Heart left ventricle (tissue), 16 donors: ENCODE measurements at regions of chr1 and their contacts with region 1.

Region 1: GRCh38 chr1:40338745-40339424 is 21.8 kb upstream of the COL9A2 start:
- DNase-seq: peak; percentile 51 to 86 (median 74)
- ATAC-seq: peak; percentile 61 to 85 (median 74)
- H3K4me3 ChIP-seq: peak overlapping the region in 1 of 12 donors; percentile 40
- H3K27ac ChIP-seq: peak overlapping the region in 1 of 12 donors; percentile 92
- H3K4me1 ChIP-seq: peaks cover 0 to 53% (median 0%) of the 10 kb centered on the region in 12 donors
- H3K27me3 ChIP-seq: peaks cover 0 to 13% (median 0%) of the 10 kb centered on the region in 9 donors
- CTCF ChIP-seq: peak; percentile 94 to 99 (median 96)
- POLR2A ChIP-seq: no peak

Region 2: GRCh38 chr1:40079774-40080400 is 259.0 kb before region 1 on chr1:
- intact Hi-C with region 1: loop called in 3 of 10 experiments (anchors 2 to 10 kb)
- DNase-seq: no peak
- ATAC-seq: peak in 1 of 4 donors; percentile 27
- H3K4me3 ChIP-seq: no peak overlapping the region
- H3K27ac ChIP-seq: peak overlapping the region in 1 of 12 donors; percentile 81
- H3K4me1 ChIP-seq: peaks cover 0 to 78% (median 0%) of the 10 kb centered on the region in 12 donors
- H3K27me3 ChIP-seq: no peaks in the 10 kb centered on the region
- CTCF ChIP-seq: no peak
- POLR2A ChIP-seq: no peak

Region 3: DNA sequence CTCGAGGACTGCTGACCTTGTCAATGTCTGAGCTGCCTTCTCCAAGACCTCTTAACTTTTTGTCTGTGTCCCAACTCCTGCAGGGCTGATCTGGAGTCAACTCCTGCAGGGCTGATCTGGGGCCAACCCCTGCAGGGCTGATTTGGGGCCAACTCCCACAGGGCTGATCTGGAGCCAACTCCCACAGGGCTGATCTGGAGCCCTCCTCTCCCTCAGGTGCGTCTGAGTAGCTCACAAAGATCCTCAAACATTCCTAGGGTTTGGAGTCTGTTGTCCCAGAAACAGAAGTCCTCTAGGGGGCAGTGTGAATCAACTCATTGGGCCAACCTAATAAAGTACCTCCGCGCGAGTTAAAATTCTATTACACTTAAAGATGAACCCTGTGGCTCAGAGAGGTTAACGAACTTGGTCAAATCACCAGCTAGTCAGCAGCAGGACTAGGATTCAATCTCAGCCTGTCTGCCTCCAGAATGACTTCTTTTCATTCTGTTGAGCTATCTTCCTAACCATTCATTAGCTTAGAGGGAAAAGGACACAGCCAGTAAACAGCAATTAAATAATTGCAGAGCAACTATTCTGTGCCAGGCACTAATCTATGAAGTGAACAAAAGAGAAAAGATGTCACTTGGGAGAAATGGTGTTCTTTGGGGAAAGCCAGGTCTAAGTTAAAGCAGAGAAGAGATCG is 194.9 kb before region 1 on chr1:
- intact Hi-C with region 1: loop called in 7 of 10 experiments (anchors 2 to 5 kb)
- DNase-seq: peak in 4 of 5 donors; percentile 31 to 51 (median 35)
- ATAC-seq: peak in 3 of 4 donors; percentile 72 to 80 (median 77)
- H3K4me3 ChIP-seq: no peak overlapping the region
- H3K27ac ChIP-seq: no peak overlapping the region
- H3K4me1 ChIP-seq: peaks cover 0 to 6% (median 0%) of the 10 kb centered on the region in 12 donors
- H3K27me3 ChIP-seq: peaks cover 0 to 33% (median 7%) of the 10 kb centered on the region in 9 donors
- CTCF ChIP-seq: peak; percentile 58 to 82 (median 74)
- POLR2A ChIP-seq: no peak

Region 4: DNA sequence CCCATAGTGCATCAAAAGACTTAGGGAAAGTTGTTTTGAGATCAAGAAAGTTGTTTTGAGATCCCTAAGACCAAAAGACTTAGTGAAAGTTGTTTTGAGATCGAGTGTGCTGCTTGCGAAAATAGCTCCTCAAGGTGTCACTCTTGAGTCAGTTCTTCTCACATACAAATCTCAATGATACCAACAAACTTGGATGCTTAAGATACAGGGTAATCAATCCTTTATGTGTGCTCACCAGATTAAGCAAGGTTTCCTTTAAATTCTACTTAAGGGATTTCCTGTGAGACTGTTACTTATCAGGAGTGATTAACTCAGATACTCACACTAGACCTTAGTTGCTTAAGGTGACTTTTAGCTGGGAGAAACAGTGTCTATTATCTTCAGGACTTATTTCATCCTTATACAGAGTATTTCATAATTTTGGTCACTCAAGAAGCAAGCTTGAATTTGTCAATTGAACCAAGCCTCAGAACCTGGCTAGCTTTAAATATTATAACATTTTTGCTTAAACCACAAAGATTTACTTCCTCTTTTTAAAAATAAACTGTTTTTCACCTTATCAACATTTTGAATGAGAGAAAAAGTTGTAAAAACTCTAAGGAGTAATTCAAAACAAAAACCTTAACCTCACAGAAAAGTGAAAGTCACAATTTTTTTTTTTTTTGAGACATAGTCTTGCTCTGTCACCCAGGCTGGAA is 185.7 kb before region 1 on chr1:
- intact Hi-C with region 1: loop called in 8 of 10 experiments (anchors 1 to 5 kb)
- DNase-seq: no peak
- ATAC-seq: no peak
- H3K4me3 ChIP-seq: no peak overlapping the region
- H3K27ac ChIP-seq: no peak overlapping the region
- H3K4me1 ChIP-seq: peaks cover 0 to 25% (median 0%) of the 10 kb centered on the region in 12 donors
- H3K27me3 ChIP-seq: peaks cover 0 to 10% (median 0%) of the 10 kb centered on the region in 9 donors
- CTCF ChIP-seq: peak; percentile 45 to 82 (median 68)
- POLR2A ChIP-seq: no peak

Region 5: DNA sequence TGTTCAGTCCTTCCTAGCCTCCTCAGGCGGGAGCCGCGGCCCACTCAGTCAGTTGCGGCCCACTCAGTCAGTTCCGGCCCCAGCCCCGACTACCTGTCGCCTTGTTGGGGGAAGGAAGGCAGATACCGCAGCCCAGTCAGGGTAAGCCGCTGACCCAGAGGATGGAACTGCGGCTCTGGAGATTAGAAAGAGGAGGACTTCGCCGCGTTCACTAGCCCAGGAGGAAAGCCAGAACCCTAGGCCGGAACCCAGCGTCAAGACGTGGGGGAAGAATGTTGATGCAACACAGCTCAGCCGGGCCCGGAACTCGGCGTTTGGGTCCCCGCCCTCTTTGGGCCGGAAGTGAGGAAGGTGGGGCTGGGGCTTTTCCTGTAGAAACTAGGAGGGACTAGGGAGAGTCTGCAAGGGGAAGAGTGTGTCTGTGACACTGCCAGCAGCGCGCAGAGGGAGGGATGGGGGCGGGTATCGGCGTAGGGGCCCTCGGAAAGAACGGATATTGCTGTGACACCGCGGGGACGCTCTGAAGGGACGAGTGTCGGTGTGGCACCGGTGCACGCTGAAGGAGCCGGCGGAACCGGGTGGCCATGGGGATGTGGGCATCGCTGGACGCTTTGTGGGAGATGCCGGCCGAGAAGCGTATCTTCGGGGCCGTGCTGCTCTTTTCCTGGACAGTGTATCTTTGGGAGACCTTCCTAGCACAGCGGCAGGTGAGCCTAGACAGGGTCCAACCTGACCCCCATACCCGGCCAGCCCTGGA is 81.0 kb before region 1 on chr1 and contains the start of gene ZMPSTE24:
- intact Hi-C with region 1: no loop called
- DNase-seq: peak; percentile 96 to 97 (median 96)
- ATAC-seq: peak; percentile 99 to 100 (median 99)
- H3K4me3 ChIP-seq: peak within 1 kb of the TSS; percentile 72 to 98 (median 90)
- H3K27ac ChIP-seq: peak within 1 kb of the TSS; percentile 86 to 98 (median 94)
- H3K4me1 ChIP-seq: peaks cover 3 to 55% (median 37%) of the 10 kb centered on the region in 12 donors
- H3K27me3 ChIP-seq: no peaks in the 10 kb centered on the region
- CTCF ChIP-seq: peak in 2 of 12 donors; percentile 14 to 19
- POLR2A ChIP-seq: peak in 1 of 2 donors; percentile 63
- total RNA-seq, gene ZMPSTE24: 26.6 to 43.4 (median 31.7) TPM

Region 6: GRCh38 chr1:40373338-40374283 is 34.7 kb after region 1 on chr1 and contains the start of gene SMAP2:
- intact Hi-C with region 1: no loop called
- DNase-seq: peak; percentile 96 to 98 (median 97)
- ATAC-seq: peak; percentile 99 to 100 (median 99)
- H3K4me3 ChIP-seq: peak within 1 kb of the TSS; percentile 65 to 100 (median 82)
- H3K27ac ChIP-seq: peak within 1 kb of the TSS; percentile 59 to 99 (median 85)
- H3K4me1 ChIP-seq: peaks cover 0 to 44% (median 12%) of the 10 kb centered on the region in 12 donors
- H3K27me3 ChIP-seq: no peaks in the 10 kb centered on the region
- CTCF ChIP-seq: no peak
- POLR2A ChIP-seq: peak in 1 of 2 donors; percentile 65
- total RNA-seq, gene SMAP2: 9.9 to 44.4 (median 12.9) TPM